Endothelial cell of umbilical vein (primary cell): ENCODE measurements at regions of chr2 and their contacts with region 1.

Region 1: GRCh38 chr2:99559075-99559662 is 69.4 kb upstream of the REV1 start:
- DNase-seq: peak; percentile 72
- H3K4me3 ChIP-seq: no peak overlapping the region
- H3K27ac ChIP-seq: no peak overlapping the region
- H3K4me1 ChIP-seq: no peaks in the 10 kb centered on the region
- H3K27me3 ChIP-seq: peaks cover 4 to 14% of the 10 kb centered on the region in 2 experiments
- CTCF ChIP-seq: peak; percentile 91 to 96
- POLR2A ChIP-seq: no peak

Region 2: DNA sequence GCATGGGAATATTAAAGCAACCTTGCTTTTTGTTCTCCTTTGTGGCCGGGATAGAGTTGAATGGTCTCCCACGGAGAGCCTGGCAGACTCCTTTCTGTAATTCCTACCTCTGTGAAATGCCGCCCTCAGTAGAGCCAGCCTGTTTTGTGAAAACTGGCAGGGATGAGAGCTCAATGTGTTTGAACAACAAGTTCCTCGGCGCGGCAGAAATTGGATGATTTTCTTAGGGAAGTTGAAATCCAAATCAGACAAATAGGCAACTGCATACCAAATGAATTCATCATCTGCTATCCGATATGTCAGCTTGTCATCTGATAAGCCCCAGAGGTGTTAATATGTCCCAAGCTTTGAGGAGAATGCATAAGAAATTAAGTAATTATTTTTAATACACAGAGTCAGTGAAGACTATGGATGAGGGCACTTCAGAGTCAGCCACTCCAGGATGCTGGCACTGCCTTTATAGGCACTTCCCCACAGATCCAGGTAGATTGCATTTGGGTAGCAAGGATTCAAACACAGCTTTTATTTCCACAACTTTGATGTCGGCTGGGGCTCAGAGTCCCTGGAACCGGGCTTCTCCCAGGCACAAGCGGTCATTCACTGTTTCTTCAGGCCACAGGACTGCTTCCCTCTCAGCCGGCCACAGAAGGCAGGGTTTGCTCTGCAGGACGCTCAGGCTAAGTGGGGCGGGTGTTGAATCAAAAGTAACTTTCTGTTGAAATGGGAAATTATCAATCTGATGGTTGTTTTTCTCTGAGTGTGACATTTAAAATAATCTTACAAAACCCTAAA is 13.4 kb after region 1 on chr2:
- CTCF ChIA-PET with region 1: interaction called, 12 read pairs
- POLR2A ChIA-PET with region 1: no interaction called
- dilution Hi-C with region 1: no loop called
- intact Hi-C with region 1: no loop called
- DNase-seq: no peak
- H3K4me3 ChIP-seq: no peak overlapping the region
- H3K27ac ChIP-seq: no peak overlapping the region
- H3K4me1 ChIP-seq: no peaks in the 10 kb centered on the region
- H3K27me3 ChIP-seq: peaks cover 0 to 5% of the 10 kb centered on the region in 2 experiments
- CTCF ChIP-seq: no peak
- POLR2A ChIP-seq: no peak

Region 3: DNA sequence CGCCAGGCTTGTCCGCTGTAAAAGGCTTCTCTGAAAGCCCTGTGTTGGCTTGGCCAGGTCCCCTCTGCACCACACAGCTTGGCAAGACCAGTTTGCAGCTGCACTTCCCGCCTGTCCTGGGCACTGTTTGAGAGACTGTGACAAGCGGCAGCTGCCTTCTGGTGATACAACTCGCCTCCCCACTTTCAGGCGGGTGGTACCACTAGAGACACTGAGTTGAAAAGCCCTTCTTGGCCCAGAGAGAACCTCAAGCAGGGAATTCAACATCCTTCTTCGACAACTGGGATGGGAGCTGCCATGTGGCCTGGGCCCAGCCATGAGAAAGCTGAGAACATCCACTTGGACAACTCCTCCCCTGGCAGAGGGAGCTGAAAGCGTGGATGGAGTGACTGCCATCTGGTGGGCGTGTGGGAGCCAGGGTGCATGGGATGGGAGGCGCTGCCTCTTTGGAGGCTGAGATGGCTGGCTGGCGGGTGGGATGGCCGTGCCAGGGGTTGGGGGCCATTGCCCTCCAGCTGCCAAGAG is 56.1 kb after region 1 on chr2:
- CTCF ChIA-PET with region 1: interaction called, 23 read pairs
- POLR2A ChIA-PET with region 1: no interaction called
- dilution Hi-C with region 1: no loop called
- intact Hi-C with region 1: no loop called
- DNase-seq: no peak
- H3K4me3 ChIP-seq: no peak overlapping the region
- H3K27ac ChIP-seq: no peak overlapping the region
- H3K4me1 ChIP-seq: no peaks in the 10 kb centered on the region
- H3K27me3 ChIP-seq: peaks cover 4 to 6% of the 10 kb centered on the region in 2 experiments
- CTCF ChIP-seq: peak in 1 of 2 donors; percentile 15
- POLR2A ChIP-seq: no peak

Region 4: DNA sequence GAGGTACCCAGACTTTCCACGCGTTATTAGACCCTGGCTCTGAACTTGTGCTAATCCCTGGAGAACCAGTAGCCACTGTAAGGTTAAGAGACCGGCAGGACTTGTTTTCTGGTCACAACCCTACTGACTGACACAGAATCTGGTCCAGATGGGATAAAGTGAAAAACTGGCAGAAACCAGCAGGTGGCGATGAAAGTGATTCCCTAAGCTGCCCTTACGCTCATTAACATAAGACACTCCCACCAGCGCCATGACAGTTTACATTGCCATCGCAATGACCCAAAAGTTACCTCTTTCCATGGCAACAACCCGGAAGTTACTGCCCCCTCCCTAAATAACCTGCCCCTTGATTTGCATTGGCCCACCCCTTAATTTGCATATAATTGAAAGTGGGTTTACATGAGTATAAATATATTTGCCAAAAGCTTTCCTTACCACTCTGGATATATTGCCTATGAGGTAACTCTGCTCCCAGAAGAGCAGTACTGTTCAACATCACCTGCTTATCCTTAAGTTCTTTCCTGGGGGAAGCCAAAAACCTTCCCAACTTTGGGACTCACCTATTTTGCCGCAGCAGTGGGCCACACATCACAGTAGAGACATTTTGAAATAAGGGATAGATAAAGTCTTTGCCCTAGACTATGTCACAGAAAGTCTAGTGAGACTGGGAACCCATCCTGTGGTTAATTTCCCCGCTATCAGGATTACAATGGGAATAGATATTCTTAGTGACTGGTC is 619.1 kb after region 1 on chr2:
- CTCF ChIA-PET with region 1: interaction called, 5 read pairs
- POLR2A ChIA-PET with region 1: no interaction called
- dilution Hi-C with region 1: no loop called
- intact Hi-C with region 1: loop called (anchors 1 kb)
- DNase-seq: peak; percentile 78
- H3K4me3 ChIP-seq: no peak overlapping the region
- H3K27ac ChIP-seq: no peak overlapping the region
- H3K4me1 ChIP-seq: no peaks in the 10 kb centered on the region
- H3K27me3 ChIP-seq: peaks cover 0 to 5% of the 10 kb centered on the region in 2 experiments
- CTCF ChIP-seq: peak; percentile 62 to 68
- POLR2A ChIP-seq: no peak

Region 5: DNA sequence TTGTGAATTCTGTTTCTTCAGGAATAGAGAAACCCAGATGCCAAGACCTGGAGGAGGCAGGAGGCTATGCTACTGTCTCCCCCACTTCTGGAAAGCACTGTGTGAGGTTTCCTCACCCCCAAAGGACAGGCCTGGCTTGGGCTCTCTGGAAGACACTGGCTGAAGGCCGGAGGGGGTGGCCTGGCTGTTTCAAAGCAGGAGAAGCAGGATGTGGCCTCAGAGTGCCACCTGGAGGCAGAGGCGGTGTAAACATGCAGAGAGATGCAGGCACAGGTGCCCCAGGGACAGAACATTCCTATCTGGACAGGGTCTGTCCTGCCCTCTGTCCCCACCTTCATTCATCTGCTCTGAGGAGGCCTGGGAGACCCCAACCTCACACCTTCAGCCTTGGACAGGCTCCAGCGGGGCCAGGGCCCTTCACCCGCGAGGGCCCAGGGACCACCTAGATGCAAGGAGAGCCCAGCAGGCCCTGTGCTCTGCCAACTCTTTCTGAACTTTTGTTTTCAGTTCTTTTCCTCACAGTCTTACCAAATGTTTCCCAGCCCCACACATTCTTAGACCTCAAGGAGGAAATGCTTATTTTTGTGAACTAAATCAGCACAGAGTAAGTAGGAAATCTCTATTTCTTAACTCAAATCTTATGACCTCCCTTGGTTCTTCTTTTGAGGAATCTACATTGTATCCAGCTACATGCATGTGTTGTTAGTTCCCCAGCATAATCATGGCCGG is 683.9 kb after region 1 on chr2:
- CTCF ChIA-PET with region 1: interaction called, 99 read pairs
- POLR2A ChIA-PET with region 1: no interaction called
- dilution Hi-C with region 1: no loop called
- intact Hi-C with region 1: loop called (anchors 1 kb)
- DNase-seq: peak; percentile 47
- H3K4me3 ChIP-seq: no peak overlapping the region
- H3K27ac ChIP-seq: no peak overlapping the region
- H3K4me1 ChIP-seq: no peaks in the 10 kb centered on the region
- H3K27me3 ChIP-seq: no peaks in the 10 kb centered on the region
- CTCF ChIP-seq: peak; percentile 71 to 80
- POLR2A ChIP-seq: no peak

Region 6: GRCh38 chr2:100381240-100381639 is 822.1 kb after region 1 on chr2:
- CTCF ChIA-PET with region 1: interaction called, 39 read pairs
- POLR2A ChIA-PET with region 1: no interaction called
- dilution Hi-C with region 1: no loop called
- intact Hi-C with region 1: loop called (anchors 5 kb)
- DNase-seq: peak; percentile 81
- H3K4me3 ChIP-seq: no peak overlapping the region
- H3K27ac ChIP-seq: no peak overlapping the region
- H3K4me1 ChIP-seq: no peaks in the 10 kb centered on the region
- H3K27me3 ChIP-seq: peaks cover 4 to 6% of the 10 kb centered on the region in 2 experiments
- CTCF ChIP-seq: peak; percentile 81 to 87
- POLR2A ChIP-seq: no peak